AG04449 (cell line): ENCODE measurements at regions of chr6 and their contacts with region 1.

Region 1: GRCh38 chr6:72580281-72580940 is 41.5 kb upstream of the KCNQ5 start:
- DNase-seq: peak; percentile 77
- H3K4me3 ChIP-seq: no peak overlapping the region
- CTCF ChIP-seq: peak; percentile 66

Region 2: GRCh38 chr6:72250664-72251063 is 329.7 kb before region 1 on chr6:
- CTCF ChIA-PET with region 1: interaction called, 28 read pairs
- POLR2A ChIA-PET with region 1: no interaction called
- DNase-seq: no peak
- H3K4me3 ChIP-seq: no peak overlapping the region
- CTCF ChIP-seq: no peak

Region 3: GRCh38 chr6:72406517-72406916 is 173.9 kb before region 1 on chr6:
- CTCF ChIA-PET with region 1: interaction called, 430 read pairs
- POLR2A ChIA-PET with region 1: interaction called, 5 read pairs
- DNase-seq: no peak
- H3K4me3 ChIP-seq: no peak overlapping the region
- CTCF ChIP-seq: no peak